GM23248 (cell line): ENCODE measurements at regions of chr14 and their contacts with region 1.

Region 1: DNA sequence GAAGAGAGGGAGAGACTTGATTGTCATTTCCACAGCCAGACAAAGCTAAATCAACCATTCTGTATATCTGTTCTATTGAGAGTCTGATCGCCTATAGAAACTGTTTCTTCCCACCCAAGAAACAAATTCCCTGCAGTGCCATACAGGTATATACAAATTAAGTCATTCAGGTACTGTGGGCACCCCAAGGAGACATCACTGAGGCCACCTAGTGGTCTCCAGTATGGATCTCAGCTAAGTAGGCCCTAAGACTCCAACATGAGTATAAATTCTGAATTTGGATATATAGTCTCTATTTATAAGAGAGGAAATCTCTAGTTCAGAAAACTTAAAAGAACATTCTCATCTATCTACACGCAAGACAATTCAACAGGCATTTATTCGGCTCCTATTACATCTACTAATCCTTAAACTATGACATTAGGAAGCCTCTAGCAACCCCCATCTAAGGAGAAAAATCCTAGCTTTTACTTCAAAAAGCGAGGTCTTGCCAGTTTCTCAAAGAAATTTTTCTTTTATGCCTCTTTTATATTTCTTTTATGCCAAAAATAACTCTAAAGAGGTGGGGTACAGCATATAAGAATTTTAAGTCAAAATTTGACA is 62.6 kb downstream of the DCAF5 start:
- DNase-seq: peak; percentile 64
- H3K4me3 ChIP-seq: no peak overlapping the region
- H3K27ac ChIP-seq: no peak overlapping the region
- H3K4me1 ChIP-seq: peaks cover 65% of the 10 kb centered on the region
- H3K27me3 ChIP-seq: no peaks in the 10 kb centered on the region

Region 2: GRCh38 chr14:68911594-68912227 is 178.6 kb before region 1 on chr14:
- in situ Hi-C with region 1: loop called (anchors 10 kb)
- DNase-seq: peak; percentile 83
- H3K4me3 ChIP-seq: no peak overlapping the region
- H3K27ac ChIP-seq: peak overlapping the region; percentile 30; the same call in 1 of the 2 replicates
- H3K4me1 ChIP-seq: peaks cover 7% of the 10 kb centered on the region; the same call in 1 of the 2 replicates
- H3K27me3 ChIP-seq: no peaks in the 10 kb centered on the region

Region 3: DNA sequence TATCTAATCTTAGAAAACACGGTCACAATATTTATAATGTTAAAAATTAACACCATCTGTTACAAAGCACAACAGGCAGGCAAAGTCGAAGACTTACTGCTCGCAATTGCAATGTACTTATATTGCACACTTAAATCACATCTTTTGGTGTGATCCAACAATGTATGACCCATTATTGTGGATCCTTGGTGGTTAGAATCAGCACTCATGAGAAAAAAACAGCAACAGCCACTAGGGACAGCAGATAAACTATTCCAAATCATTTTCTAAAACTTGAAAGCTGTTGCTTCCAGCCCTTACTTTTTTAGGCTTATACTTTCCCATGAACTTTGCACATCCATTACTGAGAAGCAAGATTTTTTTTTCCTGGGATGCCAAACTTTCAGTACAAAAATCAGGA is 1248.8 kb after region 1 on chr14:
- in situ Hi-C with region 1: no loop called
- DNase-seq: no peak
- H3K4me3 ChIP-seq: no peak overlapping the region
- H3K27ac ChIP-seq: no peak overlapping the region
- H3K4me1 ChIP-seq: no peaks in the 10 kb centered on the region
- H3K27me3 ChIP-seq: no peaks in the 10 kb centered on the region